Posterior cingulate gyrus (tissue), 11 donors: ENCODE measurements at regions of chr16 and their contacts with region 1.

Region 1: DNA sequence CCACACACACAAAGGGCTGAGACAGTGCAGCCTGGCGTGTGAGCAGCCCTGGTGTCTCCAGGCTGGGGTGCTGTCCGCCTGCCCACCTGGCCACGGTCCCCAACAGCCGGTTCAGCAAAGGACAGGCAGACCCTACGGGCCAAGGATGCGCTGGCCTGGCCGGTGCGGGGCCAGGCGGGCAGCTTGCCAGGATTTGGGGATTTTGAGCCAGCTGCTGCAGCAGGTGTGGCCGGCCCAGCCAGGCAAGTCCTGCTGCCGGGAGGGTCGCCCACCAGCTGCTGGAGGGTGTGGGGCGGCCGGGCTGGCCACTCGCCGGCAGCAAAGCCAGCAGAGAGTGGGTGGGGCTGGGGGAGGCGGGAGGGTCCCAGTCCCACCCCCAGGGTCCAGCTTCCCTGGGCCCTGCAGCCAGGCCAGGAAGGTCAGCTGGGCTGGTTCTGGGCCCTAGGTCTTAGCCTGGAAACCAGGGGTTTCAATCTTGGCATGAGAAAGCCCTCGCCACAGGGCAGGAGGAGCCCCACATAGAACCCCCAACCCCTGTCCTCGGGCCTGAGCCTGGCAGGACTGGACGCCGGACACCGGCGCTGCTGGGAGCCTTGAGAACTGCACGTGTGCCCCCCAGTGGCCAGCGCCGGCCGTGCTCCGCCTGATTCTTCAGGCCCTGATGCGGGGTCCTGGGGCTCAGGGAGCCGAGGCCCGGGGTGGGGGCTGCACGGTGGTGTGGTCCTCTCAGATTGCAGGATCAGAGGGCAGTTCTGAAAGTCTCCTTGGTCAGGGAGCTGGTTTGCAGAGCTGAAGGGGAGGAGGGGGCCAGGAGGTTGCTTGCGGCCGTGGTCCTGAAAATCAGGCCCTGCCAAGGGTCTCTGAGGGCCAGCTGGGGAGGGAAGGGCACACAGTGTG is 17.6 kb upstream of the SSTR5 start:
- DNase-seq: peak; percentile 57 to 97 (median 80)

Region 2: GRCh38 chr16:886084-886543 is 168.8 kb before region 1 on chr16:
- intact Hi-C with region 1: loop called (anchors 10 kb)
- DNase-seq: peak in 7 of 10 donors; percentile 28 to 88 (median 62)

Region 3: GRCh38 chr16:982145-983043 is 72.5 kb before region 1 on chr16:
- intact Hi-C with region 1: loop called (anchors 1 kb)
- DNase-seq: peak in 1 of 10 donors; percentile 23